Endothelial cell of umbilical vein (primary cell): ENCODE measurements at regions of chr1 and their contacts with region 1.

Region 1: DNA sequence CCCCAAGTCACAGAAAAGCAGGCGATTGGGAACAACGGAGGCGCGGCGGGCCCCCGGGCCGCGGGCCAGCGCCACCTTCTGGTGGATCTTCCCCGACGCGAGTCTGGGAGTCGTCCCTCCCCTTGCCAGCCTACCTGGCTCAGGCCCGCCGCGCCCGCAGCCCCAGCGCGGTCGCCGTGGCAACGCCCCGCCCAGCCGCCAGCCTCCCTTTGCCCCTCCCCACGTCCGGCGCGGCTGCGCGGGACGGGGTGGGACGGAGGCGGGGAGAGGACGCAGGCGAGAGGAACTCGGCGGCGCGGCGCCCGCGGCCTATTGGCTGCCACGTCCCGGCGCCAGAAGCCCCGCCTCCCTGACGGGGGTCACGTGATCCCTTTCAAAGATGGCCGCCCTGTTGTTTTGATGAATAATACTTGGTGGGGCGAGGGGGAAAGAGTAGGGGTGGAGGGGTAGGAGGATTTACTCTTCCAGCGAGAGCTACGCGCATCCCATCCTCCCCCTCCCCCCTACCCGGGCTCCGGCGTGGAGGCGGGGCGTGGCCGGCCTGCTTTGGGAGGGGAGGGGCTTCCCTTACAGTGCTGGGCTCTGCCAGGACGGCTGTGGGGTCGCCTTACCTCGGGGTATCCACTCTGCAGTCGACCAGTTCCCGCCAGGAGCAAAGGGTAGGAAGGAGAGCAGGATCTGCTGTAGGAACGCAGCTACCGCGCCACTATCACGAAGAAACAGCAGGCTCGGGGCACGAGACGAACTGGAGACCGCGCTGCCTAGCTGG is at the start of gene UBE4B:
- DNase-seq: peak; percentile 99
- H3K4me3 ChIP-seq: peak within 1 kb of the TSS; percentile 55 to 85 (median 72)
- H3K27ac ChIP-seq: peak within 1 kb of the TSS; percentile 74
- H3K4me1 ChIP-seq: peaks cover 14% of the 10 kb centered on the region
- H3K27me3 ChIP-seq: no peaks in the 10 kb centered on the region
- CTCF ChIP-seq: peak; percentile 93 to 95
- POLR2A ChIP-seq: peak; percentile 34
- total RNA-seq, gene UBE4B: 54.5 and 56.7 TPM in 2 replicates

Region 2: DNA sequence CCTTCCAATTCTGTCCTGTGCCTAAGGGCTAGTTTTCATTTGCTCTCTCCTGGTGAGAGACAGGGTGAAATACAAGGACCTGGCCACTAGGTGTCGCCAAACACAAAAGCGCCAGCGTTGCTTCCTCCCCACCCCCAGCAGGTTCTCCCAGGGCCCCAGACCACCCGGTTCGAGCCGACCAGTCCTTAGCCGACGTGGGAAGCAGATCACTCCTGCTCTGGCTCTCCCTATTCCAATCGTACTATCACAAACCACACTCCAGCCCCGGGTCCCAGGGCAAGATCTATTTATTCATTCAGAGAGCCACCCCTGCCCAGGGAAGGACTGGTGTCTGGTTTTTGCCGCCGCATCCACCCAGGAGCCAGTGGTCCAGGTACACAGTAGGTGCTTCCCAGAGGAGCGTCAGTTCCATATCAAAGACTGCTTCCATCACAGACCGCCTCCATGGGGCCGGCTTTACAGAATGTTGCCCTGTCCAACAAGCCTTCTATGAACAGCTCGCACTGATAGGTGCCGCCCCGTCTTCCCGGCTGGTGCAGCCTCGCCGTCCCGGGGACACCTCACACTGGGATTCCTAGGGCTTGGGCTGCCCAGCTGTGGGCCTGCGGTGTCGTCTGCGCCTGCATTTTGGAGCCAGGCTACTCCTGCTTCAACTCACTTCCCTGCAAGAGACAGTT is 157.7 kb before region 1 on chr1:
- CTCF ChIA-PET with region 1: no interaction called
- POLR2A ChIA-PET with region 1: no interaction called
- dilution Hi-C with region 1: no loop called
- intact Hi-C with region 1: loop called (anchors 1 kb)
- DNase-seq: peak; percentile 71
- H3K4me3 ChIP-seq: no peak overlapping the region
- H3K27ac ChIP-seq: no peak overlapping the region
- H3K4me1 ChIP-seq: no peaks in the 10 kb centered on the region
- H3K27me3 ChIP-seq: no peaks in the 10 kb centered on the region
- CTCF ChIP-seq: peak; percentile 85 to 92
- POLR2A ChIP-seq: no peak

Region 3: GRCh38 chr1:9942939-9943788 is 89.6 kb before region 1 on chr1 and contains the starts of genes LZIC and NMNAT1:
- CTCF ChIA-PET with region 1: interaction called, 11 read pairs
- POLR2A ChIA-PET with region 1: interaction called, 3 read pairs
- dilution Hi-C with region 1: no loop called
- intact Hi-C with region 1: loop called (anchors 1 kb)
- DNase-seq: peak; percentile 94
- H3K4me3 ChIP-seq: peak within 1 kb of the TSS; percentile 79 to 99 (median 95)
- H3K27ac ChIP-seq: peak within 1 kb of the TSS; percentile 91
- H3K4me1 ChIP-seq: peaks cover 4% of the 10 kb centered on the region
- H3K27me3 ChIP-seq: no peaks in the 10 kb centered on the region
- CTCF ChIP-seq: no peak
- POLR2A ChIP-seq: peak; percentile 96
- total RNA-seq, gene LZIC: 22.7 and 23.4 TPM in 2 replicates
- total RNA-seq, gene NMNAT1: 7.4 and 9.8 TPM in 2 replicates

Region 4: DNA sequence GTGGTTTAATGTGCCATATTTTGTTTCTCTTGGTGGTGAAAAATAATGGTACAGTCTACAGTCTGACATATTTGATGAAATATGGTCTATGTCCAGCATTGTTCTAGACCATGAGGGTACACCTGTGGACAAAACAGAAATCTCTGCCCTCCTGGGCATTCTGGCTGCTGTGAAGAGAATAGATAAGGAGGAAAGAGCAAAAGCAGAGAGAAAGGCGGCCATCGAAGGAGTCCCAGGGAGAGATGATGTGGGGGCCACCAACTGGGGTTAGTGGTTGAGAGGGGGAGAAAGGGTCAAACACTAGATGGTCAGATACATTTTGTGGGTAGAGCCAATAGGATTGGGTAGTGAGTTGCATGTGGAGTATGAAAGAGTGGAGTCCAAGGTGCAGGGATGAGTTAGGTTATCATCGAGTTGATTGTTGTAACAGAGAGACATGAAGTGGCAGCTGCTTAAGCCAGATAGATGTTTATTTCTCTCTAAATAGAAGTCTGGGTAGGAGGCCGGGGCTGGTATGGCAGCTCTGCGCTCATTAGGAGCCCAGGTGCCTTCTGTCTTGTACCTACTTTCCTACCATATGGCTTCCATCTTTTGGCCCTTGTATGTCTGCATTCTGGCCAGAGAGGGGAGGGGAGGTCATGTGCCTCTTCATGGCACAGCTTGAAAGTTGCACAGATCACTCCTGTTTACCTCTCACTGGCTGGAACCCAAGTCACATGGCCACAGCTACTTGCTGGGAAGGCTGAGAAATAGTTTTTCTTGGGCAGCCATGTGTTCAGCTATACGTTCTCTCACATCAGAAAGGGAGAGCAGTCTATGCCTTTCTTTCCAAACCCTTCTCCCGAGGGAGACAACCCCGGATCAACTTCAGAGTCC is 12.9 kb after region 1 on chr1:
- CTCF ChIA-PET with region 1: interaction called, 3 read pairs
- POLR2A ChIA-PET with region 1: no interaction called
- dilution Hi-C with region 1: no loop called
- intact Hi-C with region 1: loop called (anchors 1 kb)
- DNase-seq: no peak
- H3K4me3 ChIP-seq: no peak overlapping the region
- H3K27ac ChIP-seq: no peak overlapping the region
- H3K4me1 ChIP-seq: no peaks in the 10 kb centered on the region
- H3K27me3 ChIP-seq: no peaks in the 10 kb centered on the region
- CTCF ChIP-seq: no peak
- POLR2A ChIP-seq: no peak

Region 5: GRCh38 chr1:10108134-10108663 is 75.4 kb after region 1 on chr1:
- CTCF ChIA-PET with region 1: no interaction called
- POLR2A ChIA-PET with region 1: no interaction called
- dilution Hi-C with region 1: no loop called
- intact Hi-C with region 1: loop called (anchors 1 kb)
- DNase-seq: peak; percentile 83
- H3K4me3 ChIP-seq: peak overlapping the region in 1 of 3 experiments; percentile 41
- H3K27ac ChIP-seq: peak overlapping the region; percentile 92
- H3K4me1 ChIP-seq: peaks cover 23% of the 10 kb centered on the region
- H3K27me3 ChIP-seq: no peaks in the 10 kb centered on the region
- CTCF ChIP-seq: no peak
- POLR2A ChIP-seq: no peak

Region 6: DNA sequence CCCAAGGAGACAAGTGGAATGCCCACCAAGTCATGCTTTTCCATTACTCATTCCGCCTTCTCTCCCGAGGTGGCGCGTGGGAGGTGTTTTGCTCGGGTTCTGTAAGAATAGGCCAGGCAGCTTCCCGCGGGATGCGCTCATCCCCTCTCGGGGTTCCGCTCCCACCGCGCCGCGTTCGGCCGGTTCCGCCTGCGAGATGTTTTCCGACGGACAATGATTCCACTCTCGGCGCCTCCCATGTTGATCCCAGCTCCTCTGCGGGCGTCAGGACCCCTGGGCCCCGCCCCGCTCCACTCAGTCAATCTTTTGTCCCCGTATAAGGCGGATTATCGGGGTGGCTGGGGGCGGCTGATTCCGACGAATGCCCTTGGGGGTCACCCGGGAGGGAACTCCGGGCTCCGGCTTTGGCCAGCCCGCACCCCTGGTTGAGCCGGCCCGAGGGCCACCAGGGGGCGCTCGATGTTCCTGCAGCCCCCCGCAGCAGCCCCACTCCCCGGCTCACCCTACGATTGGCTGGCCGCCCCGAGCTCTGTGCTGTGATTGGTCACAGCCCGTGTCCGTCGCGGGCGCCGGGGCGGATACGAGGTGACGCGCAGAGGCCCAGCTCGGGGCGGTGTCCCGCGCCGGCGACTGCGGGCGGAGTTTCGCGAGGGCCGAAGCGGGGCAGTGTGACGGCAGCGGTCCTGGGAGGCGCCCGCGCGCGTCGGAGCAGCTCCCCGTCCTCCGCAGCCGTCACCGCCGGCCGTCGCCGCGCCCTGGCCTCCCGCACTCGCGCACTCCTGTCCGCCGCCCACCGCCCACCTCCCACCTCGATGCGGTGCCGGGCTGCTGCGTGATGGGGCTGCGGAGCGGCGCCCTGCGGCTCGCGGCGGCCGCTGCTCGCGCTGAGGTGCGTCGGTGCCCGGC is 177.4 kb after region 1 on chr1 and contains the start of gene KIF1B:
- CTCF ChIA-PET with region 1: no interaction called
- POLR2A ChIA-PET with region 1: no interaction called
- dilution Hi-C with region 1: no loop called
- intact Hi-C with region 1: loop called (anchors 5 kb)
- DNase-seq: peak; percentile 98
- H3K4me3 ChIP-seq: peak within 1 kb of the TSS; percentile 68 to 83 (median 79)
- H3K27ac ChIP-seq: peak within 1 kb of the TSS; percentile 87
- H3K4me1 ChIP-seq: peaks cover 15% of the 10 kb centered on the region
- H3K27me3 ChIP-seq: no peaks in the 10 kb centered on the region
- CTCF ChIP-seq: peak; percentile 98 to 99
- POLR2A ChIP-seq: peak; percentile 55
- total RNA-seq, gene KIF1B: 46.6 and 58.6 TPM in 2 replicates